ENCODE measurements at regions of chr6 and their contacts with region 1.

Region 1: DNA sequence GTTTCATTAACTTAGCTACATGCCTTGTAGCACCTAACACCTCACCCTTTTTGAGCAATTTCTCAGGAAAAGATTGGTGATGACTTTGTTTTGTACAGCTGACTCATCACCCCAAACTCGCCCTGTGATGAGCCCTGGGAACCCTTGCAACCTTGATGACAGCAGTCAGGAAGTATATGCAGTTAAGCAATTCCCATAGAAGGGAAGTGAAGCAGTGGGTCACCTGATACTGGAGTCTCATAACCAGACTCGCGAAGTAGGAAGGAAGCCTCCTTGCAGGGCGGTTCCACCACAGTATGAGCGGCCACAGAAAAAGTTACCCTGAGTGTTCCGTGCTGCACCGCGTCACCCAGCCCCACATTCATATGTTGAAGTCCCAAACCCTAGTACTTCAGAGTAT is 82.0 kb upstream of the EDN1 start:
- H3K4me3 Mint-ChIP-seq: peak overlapping the region; percentile 13
- H3K27ac Mint-ChIP-seq: peak overlapping the region; percentile 78
- H3K4me1 Mint-ChIP-seq: peaks cover 24% of the 10 kb centered on the region
- H3K27me3 Mint-ChIP-seq: peaks cover 4% of the 10 kb centered on the region

Region 2: DNA sequence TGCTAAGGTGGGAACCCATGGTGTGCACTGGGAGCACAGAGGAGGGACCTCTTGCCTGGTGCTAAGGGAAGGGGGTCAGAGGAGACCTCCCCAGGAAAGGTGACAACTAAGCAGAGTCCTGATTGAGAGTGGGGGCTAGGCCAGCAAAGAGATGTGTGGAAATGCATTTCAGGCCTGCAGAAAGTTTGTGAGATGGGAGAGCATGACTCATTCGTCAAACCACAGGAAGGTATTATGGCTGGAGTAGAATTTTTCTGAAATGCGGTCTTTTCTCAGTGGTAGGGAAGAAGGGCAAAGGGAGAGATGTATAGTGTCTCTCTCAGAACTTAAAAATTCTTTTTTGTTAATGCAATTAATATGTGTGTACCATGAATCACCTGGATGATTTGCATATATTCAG is 58.4 kb after region 1 on chr6:
- intact Hi-C with region 1: loop called (anchors 10 kb)
- H3K4me3 Mint-ChIP-seq: no peak overlapping the region
- H3K27ac Mint-ChIP-seq: peak overlapping the region; percentile 50
- H3K4me1 Mint-ChIP-seq: peaks cover 60% of the 10 kb centered on the region
- H3K27me3 Mint-ChIP-seq: peaks cover 6% of the 10 kb centered on the region

Region 3: GRCh38 chr6:12280458-12280857 is 72.3 kb after region 1 on chr6:
- intact Hi-C with region 1: no loop called
- H3K4me3 Mint-ChIP-seq: no peak overlapping the region
- H3K27ac Mint-ChIP-seq: no peak overlapping the region
- H3K4me1 Mint-ChIP-seq: peaks cover 31% of the 10 kb centered on the region
- H3K27me3 Mint-ChIP-seq: peaks cover 2% of the 10 kb centered on the region